ENCODE measurements at regions of chr20 and their contacts with region 1.

Region 1: DNA sequence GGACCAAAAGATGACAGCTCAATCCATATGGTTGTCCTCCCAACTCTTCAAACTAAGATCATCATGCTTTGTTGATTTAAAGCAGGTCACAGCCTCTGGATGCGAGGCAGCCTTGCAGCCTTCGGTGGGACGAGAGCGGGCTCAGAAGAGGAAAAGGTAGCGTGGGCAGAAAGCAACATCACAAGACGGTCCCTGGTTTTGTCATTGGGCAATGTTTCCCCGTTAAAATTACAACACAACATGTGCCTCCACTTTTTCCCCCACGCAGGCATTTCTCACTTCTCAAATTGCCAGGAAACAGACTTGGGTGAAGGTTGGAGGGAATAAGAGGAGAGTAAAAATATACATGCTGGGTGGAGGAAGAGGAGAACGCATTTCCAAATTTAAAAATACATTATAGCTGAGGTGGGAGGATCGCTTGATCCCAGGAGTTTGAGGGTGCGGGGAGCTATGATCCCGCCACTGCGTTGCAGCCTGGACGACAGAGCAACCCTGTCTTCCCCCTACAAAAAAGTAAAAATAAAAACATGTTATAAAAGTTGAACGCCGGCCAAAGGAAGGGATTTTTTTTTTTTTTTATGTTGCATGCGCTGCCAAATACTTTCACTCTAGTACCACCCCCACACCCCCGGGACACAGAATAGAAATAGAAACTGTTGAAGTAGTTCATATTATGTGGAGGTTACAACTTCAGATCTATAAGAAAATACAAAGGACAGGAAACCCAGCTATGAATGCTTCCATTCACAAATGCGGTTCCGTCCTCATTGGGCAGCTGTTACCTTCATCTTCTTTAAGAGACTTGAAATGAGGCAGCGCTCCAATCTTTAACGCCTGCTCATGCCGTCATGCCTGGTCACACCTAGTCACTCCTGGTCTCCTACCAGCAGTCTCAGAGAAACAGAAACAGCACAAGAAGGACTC is 13.9 kb upstream of the NAA20 start:
- DNase-seq: peak; percentile 54
- H3K4me3 ChIP-seq: peak overlapping the region in 1 of 2 donors; percentile 18
- H3K27ac ChIP-seq: peak overlapping the region; percentile 67 to 73
- H3K4me1 ChIP-seq: peaks cover 20% of the 10 kb centered on the region
- H3K27me3 ChIP-seq: no peaks in the 10 kb centered on the region
- CTCF ChIP-seq: no peak
- POLR2A ChIP-seq: no peak

Region 2: GRCh38 chr20:19692685-19693119 is 310.6 kb before region 1 on chr20:
- intact Hi-C with region 1: loop called (anchors 10 kb)
- DNase-seq: peak; percentile 74
- H3K4me3 ChIP-seq: peak overlapping the region in 1 of 2 donors; percentile 36
- H3K27ac ChIP-seq: no peak overlapping the region
- H3K4me1 ChIP-seq: no peaks in the 10 kb centered on the region
- H3K27me3 ChIP-seq: no peaks in the 10 kb centered on the region
- CTCF ChIP-seq: peak; percentile 75 to 98 (median 90)
- POLR2A ChIP-seq: no peak

Measured in testis (tissue), 5 donors.